ENCODE measurements at regions of chr7 and their contacts with region 1.

Region 1: GRCh38 chr7:104883718-104884452 is 130.1 kb upstream of the KMT2E start:
- DNase-seq: peak; percentile 74
- ATAC-seq: peak; percentile 88
- H3K4me3 Mint-ChIP-seq: no peak overlapping the region
- H3K27ac Mint-ChIP-seq: no peak overlapping the region
- H3K4me1 Mint-ChIP-seq: peaks cover 10% of the 10 kb centered on the region
- H3K27me3 Mint-ChIP-seq: peaks cover 6% of the 10 kb centered on the region

Region 2: DNA sequence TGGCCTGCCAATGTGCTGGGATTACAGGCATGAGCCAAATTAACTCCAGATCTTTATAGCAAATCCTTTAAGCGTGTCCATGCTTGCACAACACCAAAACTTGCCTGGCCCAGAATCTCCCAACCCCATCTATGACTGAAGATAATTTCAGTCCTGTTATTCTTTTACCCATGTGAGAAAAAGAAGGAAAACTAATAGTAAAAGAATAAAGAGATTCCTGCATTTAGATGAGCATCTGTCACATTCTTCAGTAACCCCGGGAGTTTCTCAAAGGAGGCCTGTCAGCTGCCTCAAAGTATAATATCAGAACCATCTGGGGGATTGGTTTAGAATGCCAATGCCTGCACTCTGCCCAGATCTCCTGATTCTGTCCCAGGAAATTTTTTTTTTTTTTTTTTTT is 28.0 kb before region 1 on chr7:
- CTCF ChIA-PET with region 1: interaction called, 22 read pairs
- POLR2A ChIA-PET with region 1: interaction called, 3 read pairs
- DNase-seq: no peak
- ATAC-seq: no peak
- H3K4me3 Mint-ChIP-seq: no peak overlapping the region
- H3K27ac Mint-ChIP-seq: no peak overlapping the region
- H3K4me1 Mint-ChIP-seq: peaks cover 16% of the 10 kb centered on the region
- H3K27me3 Mint-ChIP-seq: peaks cover 2% of the 10 kb centered on the region

Region 3: DNA sequence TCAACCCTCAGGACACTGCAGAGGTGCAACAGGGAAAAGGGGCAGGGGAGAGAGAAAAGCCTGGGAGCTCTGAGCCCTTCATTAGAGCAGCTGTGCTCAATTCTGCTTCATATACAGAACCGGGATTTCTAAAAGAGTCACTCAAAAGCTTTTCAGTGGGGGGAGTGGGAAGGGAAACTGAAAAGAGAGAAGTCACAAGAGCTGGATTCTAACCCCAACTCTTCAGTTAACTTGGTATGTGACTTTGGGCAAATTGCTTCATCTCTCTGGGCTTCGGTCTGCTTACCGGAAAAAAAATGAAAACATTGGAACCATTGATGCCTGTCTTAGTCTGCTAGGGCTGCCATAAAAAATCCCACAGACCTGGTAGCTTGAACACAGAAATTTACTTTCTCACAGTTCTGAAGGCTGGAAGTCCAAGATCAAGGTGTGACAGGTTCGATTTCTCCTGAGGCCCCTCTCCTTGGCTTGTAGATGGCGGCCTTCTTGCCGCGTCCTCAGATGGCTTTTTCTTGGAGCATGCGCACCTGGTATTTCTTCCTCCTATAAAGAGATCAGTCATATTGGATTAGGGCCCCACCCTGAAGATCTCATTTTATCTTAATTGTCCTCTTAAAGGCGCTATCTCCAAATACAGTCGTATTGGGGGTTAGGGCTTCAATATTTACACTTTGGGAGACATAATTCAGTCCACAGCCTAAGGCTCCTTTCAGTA is 11.8 kb after region 1 on chr7:
- CTCF ChIA-PET with region 1: interaction called, 61 read pairs
- POLR2A ChIA-PET with region 1: no interaction called
- DNase-seq: no peak
- ATAC-seq: no peak
- H3K4me3 Mint-ChIP-seq: no peak overlapping the region
- H3K27ac Mint-ChIP-seq: no peak overlapping the region
- H3K4me1 Mint-ChIP-seq: peaks cover 7% of the 10 kb centered on the region
- H3K27me3 Mint-ChIP-seq: peaks cover 8% of the 10 kb centered on the region

Region 4: GRCh38 chr7:104908636-104909035 is 24.8 kb after region 1 on chr7:
- CTCF ChIA-PET with region 1: interaction called, 36 read pairs
- POLR2A ChIA-PET with region 1: no interaction called
- DNase-seq: no peak
- ATAC-seq: no peak
- H3K4me3 Mint-ChIP-seq: no peak overlapping the region
- H3K27ac Mint-ChIP-seq: no peak overlapping the region
- H3K4me1 Mint-ChIP-seq: no peaks in the 10 kb centered on the region
- H3K27me3 Mint-ChIP-seq: peaks cover 30% of the 10 kb centered on the region